ENCODE measurements at regions of chr2 and their contacts with region 1.

Region 1: GRCh38 chr2:24515831-24516230 is 24.8 kb downstream of the NCOA1 start:
- DNase-seq: peak in 2 of 9 experiments; percentile 13 to 37
- ATAC-seq: peak; percentile 29
- H3K4me3 ChIP-seq: no peak overlapping the region
- H3K4me3 Mint-ChIP-seq: no peak overlapping the region
- H3K27ac ChIP-seq: no peak overlapping the region
- H3K27ac Mint-ChIP-seq: no peak overlapping the region
- H3K4me1 ChIP-seq: peaks cover 17% of the 10 kb centered on the region
- H3K4me1 Mint-ChIP-seq: peaks cover 65% of the 10 kb centered on the region
- H3K27me3 ChIP-seq: no peaks in the 10 kb centered on the region
- H3K27me3 Mint-ChIP-seq: no peaks in the 10 kb centered on the region
- CTCF ChIP-seq: no peak

Region 2: GRCh38 chr2:24471662-24472061 is 44.2 kb before region 1 on chr2:
- CTCF ChIA-PET with region 1: no interaction called
- POLR2A ChIA-PET with region 1: no interaction called
- intact Hi-C with region 1: no loop called
- DNase-seq: peak in 2 of 9 experiments; percentile 21 to 42
- ATAC-seq: peak; percentile 55
- H3K4me3 ChIP-seq: no peak overlapping the region
- H3K4me3 Mint-ChIP-seq: no peak overlapping the region
- H3K27ac ChIP-seq: no peak overlapping the region
- H3K27ac Mint-ChIP-seq: no peak overlapping the region
- H3K4me1 ChIP-seq: no peaks in the 10 kb centered on the region
- H3K4me1 Mint-ChIP-seq: no peaks in the 10 kb centered on the region
- H3K27me3 ChIP-seq: no peaks in the 10 kb centered on the region
- H3K27me3 Mint-ChIP-seq: no peaks in the 10 kb centered on the region
- CTCF ChIP-seq: no peak

Region 3: DNA sequence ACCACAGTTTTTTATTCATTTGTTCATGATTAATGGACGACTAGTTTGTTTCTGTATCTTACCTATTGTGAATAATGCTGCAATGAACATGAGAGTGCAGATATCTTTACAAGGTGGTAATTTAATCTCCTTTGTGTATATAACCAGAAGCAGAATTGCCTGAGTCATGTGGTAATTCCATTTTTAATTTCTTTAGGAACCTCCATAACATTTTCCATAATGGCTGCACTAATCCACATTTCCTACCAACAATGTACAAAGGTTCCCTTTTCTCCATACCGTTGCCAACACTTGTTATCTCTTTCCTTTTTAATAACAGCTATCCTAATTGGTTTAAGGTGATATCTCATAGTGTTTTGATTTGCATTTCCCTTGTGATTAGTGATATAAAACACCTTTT is 11.7 kb after region 1 on chr2:
- CTCF ChIA-PET with region 1: interaction called, 4 read pairs
- POLR2A ChIA-PET with region 1: interaction called, 3 read pairs
- intact Hi-C with region 1: loop called in 1 of 2 experiments (anchors 1 kb)
- DNase-seq: no peak
- ATAC-seq: no peak
- H3K4me3 ChIP-seq: no peak overlapping the region
- H3K4me3 Mint-ChIP-seq: no peak overlapping the region
- H3K27ac ChIP-seq: no peak overlapping the region
- H3K27ac Mint-ChIP-seq: no peak overlapping the region
- H3K4me1 ChIP-seq: no peaks in the 10 kb centered on the region
- H3K4me1 Mint-ChIP-seq: peaks cover 28% of the 10 kb centered on the region
- H3K27me3 ChIP-seq: no peaks in the 10 kb centered on the region
- H3K27me3 Mint-ChIP-seq: no peaks in the 10 kb centered on the region
- CTCF ChIP-seq: no peak

Measured in CD8-positive, alpha-beta T cell (primary cell).